Activated T-helper 1 cell treated with anti-CD3 and anti-CD28 coated beads, Interleukin-12 subunit alpha, Interleukin-12 subunit beta, Interleukin-2, Interleukin-4 antibody, amounts not matched to agents 30 ng/mL and 10 ng/mL and 1 ng/mL, durations not matched to agents 14 hours and 24 hours and 36 hours (primary cell): ENCODE measurements at regions of chr17 and their contacts with region 1.

Region 1: GRCh38 chr17:39595294-39595693 is 12.4 kb downstream of the NEUROD2 start:
- DNase-seq: no peak
- H3K4me3 Mint-ChIP-seq: no peak overlapping the region
- H3K27ac Mint-ChIP-seq: no peak overlapping the region
- H3K4me1 Mint-ChIP-seq: peaks cover 4% of the 10 kb centered on the region
- H3K27me3 Mint-ChIP-seq: peaks cover 66% of the 10 kb centered on the region

Region 2: DNA sequence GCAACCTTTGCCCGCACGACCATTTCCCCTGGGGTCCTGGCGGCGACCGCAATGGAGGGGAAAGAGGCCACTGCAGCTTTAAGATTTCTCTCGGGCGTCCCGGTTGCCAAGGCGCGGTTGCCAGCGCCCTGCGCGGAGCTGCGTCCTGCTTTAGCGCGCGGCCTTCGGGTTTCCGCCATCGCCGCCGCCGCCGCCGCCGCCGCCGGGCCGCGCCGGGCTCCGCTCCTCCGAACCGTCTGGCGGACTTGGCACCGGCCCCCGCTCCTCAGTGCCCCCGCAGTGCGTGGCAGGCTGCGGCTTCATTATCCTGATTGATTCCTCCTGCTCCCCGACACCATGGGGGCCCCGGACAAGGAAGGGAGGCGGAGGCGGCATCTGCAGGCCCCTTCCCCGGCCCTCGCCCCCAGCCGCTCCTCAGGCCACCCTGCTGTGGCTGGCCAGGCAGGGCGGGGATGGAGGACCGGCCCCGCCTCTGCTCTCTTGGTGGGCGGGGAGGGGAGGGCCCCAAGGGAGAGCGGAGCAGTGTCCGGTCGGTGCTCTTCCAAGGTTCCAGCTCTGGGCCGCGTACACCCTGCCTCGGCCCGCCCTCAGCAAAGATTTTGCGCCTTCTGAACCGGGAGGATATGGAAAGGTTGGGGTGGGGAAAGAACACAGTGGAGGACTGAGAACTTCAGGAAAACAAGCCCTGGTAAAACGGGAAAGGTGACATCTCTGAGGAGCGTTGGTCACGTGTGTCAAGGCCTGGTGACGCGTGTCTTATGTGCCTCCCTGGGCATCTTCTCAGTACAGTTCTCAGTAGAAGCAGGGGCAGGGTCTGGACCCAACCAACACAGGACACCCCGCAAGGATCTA is 21.6 kb before region 1 on chr17:
- intact Hi-C with region 1: no loop called
- DNase-seq: peak; percentile 14
- H3K4me3 Mint-ChIP-seq: peak overlapping the region; percentile 79
- H3K27ac Mint-ChIP-seq: peak overlapping the region; percentile 64
- H3K4me1 Mint-ChIP-seq: peaks cover 5% of the 10 kb centered on the region
- H3K27me3 Mint-ChIP-seq: peaks cover 7% of the 10 kb centered on the region

Region 3: GRCh38 chr17:39607851-39608130 is 12.5 kb after region 1 on chr17 and contains the start of gene NEUROD2:
- intact Hi-C with region 1: loop called (anchors 2 kb)
- DNase-seq: no peak
- H3K4me3 Mint-ChIP-seq: no peak within 1 kb of the TSS
- H3K27ac Mint-ChIP-seq: no peak within 1 kb of the TSS
- H3K4me1 Mint-ChIP-seq: peaks cover 8% of the 10 kb centered on the region
- H3K27me3 Mint-ChIP-seq: peaks cover 59% of the 10 kb centered on the region
- total RNA-seq, gene NEUROD2: not detected in 2 replicates